Activated B cell treated with CpG ODN at 0.5 μM for 24 hours (primary cell): ENCODE measurements at regions of chr10 and their contacts with region 1.

Region 1: DNA sequence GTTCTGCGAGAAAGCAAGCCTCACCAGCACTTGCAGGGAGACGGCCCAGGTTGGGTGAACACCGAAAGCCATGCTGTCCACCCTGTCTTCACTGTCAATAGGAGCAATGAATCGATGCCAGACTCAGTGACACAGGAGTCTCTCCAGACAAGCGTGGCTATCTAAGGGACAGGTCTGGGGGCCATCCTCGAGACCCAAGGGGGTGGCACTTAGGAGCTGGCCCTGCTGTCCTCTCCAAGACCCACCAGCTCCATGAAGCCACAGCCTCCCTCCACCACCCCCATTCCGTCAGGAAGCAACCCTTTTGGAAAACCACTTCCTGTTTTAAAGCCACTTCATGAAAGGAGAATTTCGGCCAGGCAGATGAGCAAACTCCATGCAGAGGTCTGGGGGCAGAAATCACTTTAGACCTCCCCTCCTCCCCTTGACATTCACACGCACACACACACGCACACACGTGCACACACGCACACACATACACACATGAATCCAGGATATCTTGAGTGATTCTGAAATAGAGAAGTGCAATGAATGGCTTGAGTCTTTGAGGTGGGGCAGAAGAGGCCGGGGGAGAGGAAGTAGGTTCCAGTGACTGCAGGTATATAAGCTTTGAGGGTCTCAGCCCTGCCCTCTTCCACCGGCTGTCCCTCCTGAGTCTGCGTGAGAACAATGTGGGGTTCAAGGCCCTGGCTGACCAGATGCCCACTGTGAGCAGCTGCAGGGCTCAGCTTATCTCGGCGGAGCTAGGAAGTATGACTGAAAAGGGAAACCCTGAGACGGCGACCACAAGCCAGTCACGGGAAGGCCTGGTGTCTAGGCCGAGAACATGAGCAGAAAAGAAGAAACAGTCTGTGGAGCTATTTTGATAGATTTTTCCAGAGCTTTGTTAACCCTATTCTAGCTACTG is 25.0 kb downstream of the RGS10 start:
- DNase-seq: peak; percentile 59
- ATAC-seq: peak; percentile 71
- H3K4me3 Mint-ChIP-seq: peak overlapping the region; percentile 67
- H3K27ac Mint-ChIP-seq: peak overlapping the region; percentile 94
- H3K4me1 Mint-ChIP-seq: peaks cover 34% of the 10 kb centered on the region
- H3K27me3 Mint-ChIP-seq: no peaks in the 10 kb centered on the region
- CTCF ChIP-seq: no peak

Region 2: GRCh38 chr10:119024882-119025710 is 492.4 kb before region 1 on chr10:
- CTCF ChIA-PET with region 1: no interaction called
- POLR2A ChIA-PET with region 1: no interaction called
- intact Hi-C with region 1: no loop called
- DNase-seq: no peak
- ATAC-seq: no peak
- H3K4me3 Mint-ChIP-seq: no peak overlapping the region
- H3K27ac Mint-ChIP-seq: no peak overlapping the region
- H3K4me1 Mint-ChIP-seq: peaks cover 5% of the 10 kb centered on the region
- H3K27me3 Mint-ChIP-seq: peaks cover 29% of the 10 kb centered on the region
- CTCF ChIP-seq: no peak

Region 3: GRCh38 chr10:119178372-119179119 is 338.9 kb before region 1 on chr10 and contains the start of gene PRDX3:
- CTCF ChIA-PET with region 1: no interaction called
- POLR2A ChIA-PET with region 1: interaction called, 4 read pairs
- intact Hi-C with region 1: loop called (anchors 1 kb)
- DNase-seq: peak; percentile 92
- ATAC-seq: peak; percentile 99
- H3K4me3 Mint-ChIP-seq: peak within 1 kb of the TSS; percentile 98
- H3K27ac Mint-ChIP-seq: peak within 1 kb of the TSS; percentile 93
- H3K4me1 Mint-ChIP-seq: peaks cover 26% of the 10 kb centered on the region
- H3K27me3 Mint-ChIP-seq: no peaks in the 10 kb centered on the region
- CTCF ChIP-seq: no peak
- total RNA-seq, gene PRDX3: 62.8 and 63.7 TPM in 2 replicates

Region 4: DNA sequence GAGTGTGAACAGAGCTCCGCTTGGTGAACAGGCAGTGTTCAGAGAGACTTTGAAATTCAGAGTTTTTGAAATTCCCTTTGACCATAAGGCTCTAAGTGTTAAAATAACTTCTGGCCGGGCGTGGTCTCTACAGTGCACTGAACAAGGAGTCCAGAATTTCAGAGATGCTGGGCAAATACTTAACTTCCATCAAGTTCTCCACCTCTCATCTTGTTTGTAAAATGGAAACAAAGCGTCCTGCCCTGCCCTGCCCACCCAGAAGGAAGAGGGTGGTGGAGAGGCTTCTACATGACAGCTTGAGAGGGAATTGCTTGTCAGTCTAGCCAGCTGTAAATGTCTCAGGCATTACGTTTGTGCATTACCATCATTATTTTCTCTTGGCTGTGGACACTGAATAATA is 77.6 kb before region 1 on chr10:
- CTCF ChIA-PET with region 1: no interaction called
- POLR2A ChIA-PET with region 1: no interaction called
- intact Hi-C with region 1: no loop called
- DNase-seq: no peak
- ATAC-seq: no peak
- H3K4me3 Mint-ChIP-seq: no peak overlapping the region
- H3K27ac Mint-ChIP-seq: no peak overlapping the region
- H3K4me1 Mint-ChIP-seq: peaks cover 11% of the 10 kb centered on the region
- H3K27me3 Mint-ChIP-seq: no peaks in the 10 kb centered on the region
- CTCF ChIP-seq: no peak

Region 5: GRCh38 chr10:119502209-119502608 is 15.3 kb before region 1 on chr10:
- CTCF ChIA-PET with region 1: no interaction called
- POLR2A ChIA-PET with region 1: interaction called, 5 read pairs
- intact Hi-C with region 1: loop called (anchors 2 kb)
- DNase-seq: no peak
- ATAC-seq: peak; percentile 80
- H3K4me3 Mint-ChIP-seq: peak overlapping the region; percentile 28
- H3K27ac Mint-ChIP-seq: peak overlapping the region; percentile 53
- H3K4me1 Mint-ChIP-seq: peaks cover 13% of the 10 kb centered on the region
- H3K27me3 Mint-ChIP-seq: no peaks in the 10 kb centered on the region
- CTCF ChIP-seq: no peak

Region 6: DNA sequence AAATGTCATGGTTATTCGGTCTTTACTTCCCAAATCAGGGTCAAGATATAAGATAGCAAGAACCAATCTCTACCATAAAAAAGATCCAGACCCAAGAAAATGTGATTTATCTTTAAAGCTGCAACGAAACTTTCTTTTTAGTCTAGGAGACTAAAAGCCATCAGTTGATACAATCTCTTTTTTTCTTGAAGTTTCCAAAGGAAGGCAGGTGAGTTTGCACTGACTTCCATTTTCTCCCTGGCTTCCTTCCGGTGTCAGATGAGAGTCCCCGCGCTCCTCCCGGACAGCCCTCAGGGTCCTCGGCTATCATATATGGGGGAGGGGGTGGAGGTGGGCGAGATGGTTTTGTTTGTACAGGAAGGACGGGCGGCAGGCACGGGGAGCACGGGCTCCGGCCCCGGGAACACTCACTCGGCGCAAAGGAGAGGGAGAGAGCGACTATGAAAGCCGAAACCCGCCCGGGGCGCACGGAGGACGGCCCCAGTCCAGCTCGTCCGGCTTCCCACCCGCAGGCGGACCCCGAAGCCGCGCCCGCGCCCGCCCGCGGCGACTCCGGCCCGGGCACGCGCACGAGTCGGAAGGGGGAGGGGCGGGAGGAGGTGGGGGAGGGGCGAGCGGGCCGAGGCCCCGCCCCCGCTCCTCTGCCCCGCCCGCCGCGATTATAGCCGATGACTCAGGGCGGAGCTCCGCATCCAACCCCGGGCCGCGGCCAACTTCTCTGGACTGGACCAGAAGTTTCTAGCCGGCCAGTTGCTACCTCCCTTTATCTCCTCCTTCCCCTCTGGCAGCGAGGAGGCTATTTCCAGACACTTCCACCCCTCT is 133.4 kb after region 1 on chr10 and contains the start of gene BAG3:
- CTCF ChIA-PET with region 1: no interaction called
- POLR2A ChIA-PET with region 1: no interaction called
- intact Hi-C with region 1: no loop called
- DNase-seq: peak; percentile 73
- ATAC-seq: peak; percentile 93
- H3K4me3 Mint-ChIP-seq: peak within 1 kb of the TSS; percentile 97
- H3K27ac Mint-ChIP-seq: peak within 1 kb of the TSS; percentile 95
- H3K4me1 Mint-ChIP-seq: peaks cover 16% of the 10 kb centered on the region
- H3K27me3 Mint-ChIP-seq: no peaks in the 10 kb centered on the region
- CTCF ChIP-seq: no peak
- total RNA-seq, gene BAG3: 4.3 and 4.7 TPM in 2 replicates

Region 7: GRCh38 chr10:119750391-119751230 is 233.1 kb after region 1 on chr10:
- CTCF ChIA-PET with region 1: no interaction called
- POLR2A ChIA-PET with region 1: no interaction called
- intact Hi-C with region 1: no loop called
- DNase-seq: no peak
- ATAC-seq: peak; percentile 96
- H3K4me3 Mint-ChIP-seq: peak overlapping the region; percentile 69
- H3K27ac Mint-ChIP-seq: peak overlapping the region; percentile 86
- H3K4me1 Mint-ChIP-seq: peaks cover 43% of the 10 kb centered on the region
- H3K27me3 Mint-ChIP-seq: no peaks in the 10 kb centered on the region
- CTCF ChIP-seq: peak; percentile 38